Mammary epithelial cell (primary cell): ENCODE measurements at regions of chr16 and their contacts with region 1.

Region 1: DNA sequence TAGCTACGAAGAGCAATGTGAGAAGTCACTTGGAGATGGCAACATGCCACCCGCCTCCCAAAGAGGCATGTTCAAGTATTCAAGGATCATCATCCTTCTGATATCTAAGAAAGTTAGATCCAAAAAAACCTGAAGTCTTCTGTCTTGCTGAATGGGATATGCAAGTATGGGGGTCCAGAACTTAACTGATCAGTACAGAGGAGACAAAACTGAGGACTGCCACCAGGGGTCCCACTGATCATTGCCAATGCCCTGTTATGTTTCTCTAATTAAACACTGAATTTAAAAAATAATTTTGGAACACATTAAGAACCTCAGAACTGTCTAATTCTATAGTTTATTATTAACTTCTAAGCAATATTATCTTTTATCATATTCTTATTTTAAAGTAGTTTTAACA is 99.7 kb downstream of the CDH8 start:
- DNase-seq: no peak
- H3K4me3 ChIP-seq: no peak overlapping the region
- H3K27ac ChIP-seq: no peak overlapping the region
- H3K4me1 ChIP-seq: no peaks in the 10 kb centered on the region
- H3K27me3 ChIP-seq: no peaks in the 10 kb centered on the region
- CTCF ChIP-seq: peak; percentile 19 to 34

Region 2: GRCh38 chr16:61871837-61872777 is 64.4 kb before region 1 on chr16:
- CTCF ChIA-PET with region 1: no interaction called
- dilution Hi-C with region 1: no loop called
- in situ Hi-C with region 1: no loop called
- intact Hi-C with region 1: no loop called
- DNase-seq: no peak
- H3K4me3 ChIP-seq: no peak overlapping the region
- H3K27ac ChIP-seq: no peak overlapping the region
- H3K4me1 ChIP-seq: no peaks in the 10 kb centered on the region
- H3K27me3 ChIP-seq: peaks cover 2% of the 10 kb centered on the region
- CTCF ChIP-seq: no peak

Region 3: GRCh38 chr16:62041401-62041800 is 104.9 kb after region 1 on chr16:
- CTCF ChIA-PET with region 1: no interaction called
- dilution Hi-C with region 1: no loop called
- in situ Hi-C with region 1: no loop called
- intact Hi-C with region 1: loop called (anchors 10 kb)
- DNase-seq: peak; percentile 27
- H3K4me3 ChIP-seq: no peak overlapping the region
- H3K27ac ChIP-seq: no peak overlapping the region
- H3K4me1 ChIP-seq: peaks cover 8% of the 10 kb centered on the region
- H3K27me3 ChIP-seq: peaks cover 10% of the 10 kb centered on the region
- CTCF ChIP-seq: peak; percentile 52 to 73